GM12878 (cell line): ENCODE measurements at regions of chr11 and their contacts with region 1.

Region 1: GRCh38 chr11:64846998-64847666 is 2.7 kb upstream of the CDC42BPG start:
- DNase-seq: no peak
- ATAC-seq: peak; percentile 61
- H3K4me3 ChIP-seq: no peak overlapping the region
- H3K27ac ChIP-seq: no peak overlapping the region
- H3K4me1 ChIP-seq: peaks cover 55% of the 10 kb centered on the region
- H3K27me3 ChIP-seq: no peaks in the 10 kb centered on the region
- CTCF ChIP-seq: peak; percentile 86 to 97 (median 96)
- EP300 ChIP-seq: no peak
- POLR2A ChIP-seq: peak; percentile 36; the same call in 1 of the 2 replicates
- RAD21 ChIP-seq: peak; percentile 90

Region 2: DNA sequence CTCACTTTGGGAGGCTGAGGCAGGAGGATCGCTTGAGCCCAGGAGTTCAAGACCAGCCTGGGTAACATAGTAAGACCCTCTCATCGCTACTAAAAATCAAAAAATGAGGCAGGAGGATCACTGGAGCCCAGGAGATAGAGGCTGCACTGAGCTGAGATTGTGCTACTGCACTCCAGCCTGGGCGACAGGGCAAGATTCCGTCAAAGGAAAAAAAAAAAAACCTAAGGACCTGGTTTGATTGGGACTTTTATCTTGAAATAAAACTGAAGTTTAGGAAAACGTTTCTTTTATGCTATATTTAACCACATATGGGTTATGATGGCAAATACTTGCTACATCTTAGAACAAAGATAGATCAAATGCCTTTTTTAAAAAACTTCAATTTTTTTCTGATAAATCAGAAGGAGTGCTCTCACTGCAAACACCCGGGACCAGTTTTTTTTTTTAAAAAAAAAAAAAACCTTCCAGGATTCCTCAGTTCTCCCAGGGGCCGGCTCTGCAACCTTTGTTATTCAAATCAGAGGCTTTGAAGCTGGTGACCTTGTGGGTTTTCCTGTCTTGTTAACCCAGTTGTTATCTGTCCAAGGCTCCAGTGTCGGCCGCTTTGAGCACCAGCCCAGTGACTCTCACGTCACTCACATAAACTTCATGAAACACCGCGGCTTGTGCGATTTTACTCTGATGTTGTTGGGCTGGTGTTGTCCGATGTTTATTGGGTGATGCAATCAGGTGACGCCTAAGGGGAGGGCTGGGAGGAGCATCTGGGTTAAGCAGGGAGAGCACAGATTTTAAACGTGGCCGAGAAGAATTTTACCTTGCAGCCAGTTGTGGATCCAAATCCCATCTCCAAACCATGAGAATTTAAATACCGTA is 280.9 kb before region 1 on chr11:
- CTCF ChIA-PET with region 1: no interaction called
- POLR2A ChIA-PET with region 1: no interaction called
- RAD21 ChIA-PET with region 1: no interaction called
- SMC1A ChIA-PET with region 1: no interaction called
- in situ Hi-C with region 1: no loop called
- intact Hi-C with region 1: no loop called
- DNase-seq: no peak
- ATAC-seq: no peak
- H3K4me3 ChIP-seq: no peak overlapping the region
- H3K27ac ChIP-seq: no peak overlapping the region
- H3K4me1 ChIP-seq: no peaks in the 10 kb centered on the region
- H3K27me3 ChIP-seq: no peaks in the 10 kb centered on the region
- CTCF ChIP-seq: no peak
- EP300 ChIP-seq: no peak
- POLR2A ChIP-seq: no peak
- RAD21 ChIP-seq: no peak

Region 3: DNA sequence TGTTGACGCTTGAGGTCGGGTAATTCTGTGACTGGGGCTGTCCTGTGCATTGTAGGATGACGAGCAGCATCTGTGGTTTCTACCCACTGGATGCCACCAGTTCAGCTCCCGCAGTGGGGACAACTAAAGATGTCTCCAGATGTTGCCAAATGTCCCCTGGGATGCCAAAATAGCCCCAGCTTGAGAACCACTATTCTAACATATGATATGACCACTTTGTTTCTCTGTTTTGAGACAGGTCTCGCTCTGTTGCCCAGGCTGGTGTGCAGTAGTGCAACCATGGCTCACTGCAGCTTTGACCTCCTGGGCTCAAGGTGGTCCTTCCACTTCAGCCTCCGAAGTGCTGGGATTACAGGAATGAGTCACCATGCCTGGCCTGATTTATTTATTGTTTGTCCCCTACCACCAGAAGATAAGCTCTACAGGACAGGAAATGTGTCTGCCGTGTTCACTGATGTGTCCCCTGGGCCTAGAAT is 32.4 kb before region 1 on chr11:
- CTCF ChIA-PET with region 1: interaction called, 19 read pairs
- POLR2A ChIA-PET with region 1: no interaction called
- RAD21 ChIA-PET with region 1: interaction called, 6 read pairs
- SMC1A ChIA-PET with region 1: interaction called, 6 read pairs
- in situ Hi-C with region 1: no loop called
- intact Hi-C with region 1: no loop called
- DNase-seq: peak; percentile 94
- ATAC-seq: peak; percentile 73
- H3K4me3 ChIP-seq: no peak overlapping the region
- H3K27ac ChIP-seq: no peak overlapping the region
- H3K4me1 ChIP-seq: peaks cover 18% of the 10 kb centered on the region
- H3K27me3 ChIP-seq: no peaks in the 10 kb centered on the region
- CTCF ChIP-seq: no peak
- EP300 ChIP-seq: peak; percentile 18 to 67; a peak in 2 of 4 replicates
- POLR2A ChIP-seq: no peak
- RAD21 ChIP-seq: no peak

Region 4: GRCh38 chr11:64887757-64888405 is 40.7 kb after region 1 on chr11:
- CTCF ChIA-PET with region 1: interaction called, 1,208 read pairs
- POLR2A ChIA-PET with region 1: interaction called, 620 read pairs
- RAD21 ChIA-PET with region 1: interaction called, 217 read pairs
- SMC1A ChIA-PET with region 1: interaction called, 227 read pairs
- in situ Hi-C with region 1: loop called (anchors 5 kb)
- intact Hi-C with region 1: no loop called
- DNase-seq: no peak
- ATAC-seq: peak; percentile 97
- H3K4me3 ChIP-seq: 0 out of 2 replicates have a peak overlapping the region, but pooled peaks have one; percentile 3
- H3K27ac ChIP-seq: peak overlapping the region; percentile 27; the same call in 1 of the 2 replicates
- H3K4me1 ChIP-seq: peaks cover 12% of the 10 kb centered on the region
- H3K27me3 ChIP-seq: no peaks in the 10 kb centered on the region
- CTCF ChIP-seq: peak; percentile 93 to 96 (median 96)
- EP300 ChIP-seq: no peak
- POLR2A ChIP-seq: no peak
- RAD21 ChIP-seq: peak; percentile 42

Region 5: DNA sequence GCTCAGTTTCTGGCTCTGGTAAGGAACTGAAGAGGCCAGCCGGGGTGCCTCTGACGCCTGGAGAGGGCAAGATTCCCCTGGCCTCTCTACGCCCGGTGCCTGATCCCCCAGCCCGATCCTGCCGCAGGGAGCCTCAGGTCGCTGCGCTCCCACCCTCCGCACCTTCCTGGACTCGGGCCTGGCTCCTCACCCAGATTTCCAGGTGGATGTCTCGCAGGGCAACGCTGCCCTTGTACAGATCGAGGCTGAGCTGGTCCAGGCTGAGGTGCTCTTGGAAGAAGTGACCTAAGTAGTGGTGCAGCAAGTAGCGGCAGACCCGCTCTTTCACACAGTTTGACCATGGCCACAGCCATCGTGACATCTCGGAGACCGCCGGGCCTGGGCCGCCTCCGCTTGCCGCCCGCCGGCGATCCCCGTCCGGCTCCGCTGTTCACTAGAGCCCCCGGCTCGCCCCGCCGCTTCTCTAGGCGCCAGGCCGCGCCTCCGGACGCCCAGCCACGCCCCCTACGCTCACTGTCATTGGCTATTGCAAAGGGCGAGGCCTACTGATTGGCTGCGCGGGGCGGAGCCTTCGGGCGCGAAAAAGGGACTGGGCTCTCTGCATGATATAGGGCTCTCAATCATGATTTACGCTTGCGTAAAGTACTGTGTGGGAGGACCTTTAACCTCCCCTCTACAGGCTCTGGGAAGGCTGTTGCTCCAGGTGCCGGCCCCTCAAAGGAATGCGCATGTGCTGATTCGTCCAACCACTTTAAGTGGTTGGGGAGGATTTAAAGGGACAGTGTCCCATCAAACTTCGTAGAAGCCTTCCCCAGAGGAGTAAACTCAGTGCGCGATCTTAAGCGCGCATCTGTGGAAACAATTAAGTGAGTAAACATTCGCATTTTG is 69.9 kb after region 1 on chr11 and contains the start of gene ATG2A:
- CTCF ChIA-PET with region 1: interaction called, 18 read pairs
- POLR2A ChIA-PET with region 1: interaction called, 3 read pairs
- RAD21 ChIA-PET with region 1: interaction called, 3 read pairs
- SMC1A ChIA-PET with region 1: interaction called, 11 read pairs
- in situ Hi-C with region 1: no loop called
- intact Hi-C with region 1: no loop called
- DNase-seq: peak; percentile 99
- ATAC-seq: peak; percentile 98
- H3K4me3 ChIP-seq: peak within 1 kb of the TSS; percentile 86
- H3K27ac ChIP-seq: peak within 1 kb of the TSS; percentile 91
- H3K4me1 ChIP-seq: peaks cover 6% of the 10 kb centered on the region
- H3K27me3 ChIP-seq: no peaks in the 10 kb centered on the region
- CTCF ChIP-seq: no peak
- EP300 ChIP-seq: no peak
- POLR2A ChIP-seq: peak; percentile 86
- RAD21 ChIP-seq: no peak
- polyA plus RNA-seq, gene ATG2A: 0.08 to 0.51 TPM

Region 6: GRCh38 chr11:65111744-65112414 is 264.7 kb after region 1 on chr11 and contains the start of gene TM7SF2:
- CTCF ChIA-PET with region 1: interaction called, 60 read pairs
- POLR2A ChIA-PET with region 1: no interaction called
- RAD21 ChIA-PET with region 1: interaction called, 12 read pairs
- SMC1A ChIA-PET with region 1: interaction called, 11 read pairs
- in situ Hi-C with region 1: no loop called
- intact Hi-C with region 1: loop called (anchors 2 kb)
- DNase-seq: no peak
- ATAC-seq: peak; percentile 89
- H3K4me3 ChIP-seq: peak within 1 kb of the TSS; percentile 85
- H3K27ac ChIP-seq: peak within 1 kb of the TSS; percentile 14
- H3K4me1 ChIP-seq: peaks cover 24% of the 10 kb centered on the region
- H3K27me3 ChIP-seq: no peaks in the 10 kb centered on the region
- CTCF ChIP-seq: no peak
- EP300 ChIP-seq: no peak
- POLR2A ChIP-seq: peak; percentile 97
- RAD21 ChIP-seq: no peak
- polyA plus RNA-seq, gene TM7SF2: 0.52 to 2.9 TPM

Region 7: GRCh38 chr11:65251476-65251875 is 404.3 kb after region 1 on chr11:
- CTCF ChIA-PET with region 1: interaction called, 8 read pairs
- POLR2A ChIA-PET with region 1: no interaction called
- RAD21 ChIA-PET with region 1: no interaction called
- SMC1A ChIA-PET with region 1: no interaction called
- in situ Hi-C with region 1: no loop called
- intact Hi-C with region 1: loop called (anchors 10 kb)
- DNase-seq: no peak
- ATAC-seq: no peak
- H3K4me3 ChIP-seq: no peak overlapping the region
- H3K27ac ChIP-seq: no peak overlapping the region
- H3K4me1 ChIP-seq: no peaks in the 10 kb centered on the region
- H3K27me3 ChIP-seq: no peaks in the 10 kb centered on the region
- CTCF ChIP-seq: no peak
- EP300 ChIP-seq: no peak
- POLR2A ChIP-seq: no peak
- RAD21 ChIP-seq: no peak